Activated B cell treated with CpG ODN at 0.5 μM for 24 hours (primary cell): ENCODE measurements at regions of chr11 and their contacts with region 1.

Region 1: GRCh38 chr11:87501388-87501787 is 463.7 kb downstream of the TMEM135 start:
- DNase-seq: no peak
- ATAC-seq: no peak
- H3K4me3 Mint-ChIP-seq: no peak overlapping the region
- H3K27ac Mint-ChIP-seq: no peak overlapping the region
- H3K4me1 Mint-ChIP-seq: no peaks in the 10 kb centered on the region
- H3K27me3 Mint-ChIP-seq: no peaks in the 10 kb centered on the region
- CTCF ChIP-seq: no peak

Region 2: DNA sequence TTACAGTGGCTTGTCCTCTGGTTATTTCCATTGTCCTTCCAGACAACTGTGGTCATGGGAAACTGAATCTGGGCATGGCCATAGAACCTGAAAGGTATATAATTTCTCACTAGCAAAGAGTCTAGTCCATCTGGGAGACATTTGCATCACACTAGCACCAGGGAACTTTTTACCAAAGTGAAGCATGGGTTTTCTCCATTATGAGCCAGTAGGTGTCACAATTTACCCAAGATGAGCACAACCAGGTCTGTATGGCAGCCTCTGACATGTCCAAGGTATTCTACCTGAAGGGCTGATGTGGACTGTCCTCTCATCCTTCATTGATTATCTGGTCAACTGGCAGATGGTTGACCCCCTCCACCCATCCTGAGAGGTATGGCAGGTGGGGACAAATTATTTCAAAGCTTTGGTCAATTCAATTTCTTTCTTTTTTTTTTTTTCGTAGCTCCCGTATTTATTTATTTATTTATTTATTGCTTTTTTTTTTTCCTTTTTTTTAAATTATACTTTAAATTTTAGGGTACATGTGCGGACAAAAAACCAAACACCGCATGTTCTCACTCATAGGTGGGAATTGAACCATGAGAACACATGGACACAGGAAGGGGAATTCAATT is 37.8 kb before region 1 on chr11:
- CTCF ChIA-PET with region 1: no interaction called
- POLR2A ChIA-PET with region 1: interaction called, 10 read pairs
- intact Hi-C with region 1: no loop called
- DNase-seq: no peak
- ATAC-seq: no peak
- H3K4me3 Mint-ChIP-seq: no peak overlapping the region
- H3K27ac Mint-ChIP-seq: no peak overlapping the region
- H3K4me1 Mint-ChIP-seq: no peaks in the 10 kb centered on the region
- H3K27me3 Mint-ChIP-seq: no peaks in the 10 kb centered on the region
- CTCF ChIP-seq: no peak